ENCODE measurements at regions of chr9 and their contacts with region 1.

Region 1: GRCh38 chr9:88593537-88594185 is 58.7 kb downstream of the NXNL2 start:
- DNase-seq: peak in 1 of 2 donors; percentile 74
- ATAC-seq: peak in 2 of 3 donors; percentile 49 to 78
- H3K4me3 ChIP-seq: no peak overlapping the region
- H3K4me3 Mint-ChIP-seq: no peak overlapping the region
- H3K27ac ChIP-seq: no peak overlapping the region
- H3K27ac Mint-ChIP-seq: no peak overlapping the region
- H3K4me1 ChIP-seq: no peaks in the 10 kb centered on the region
- H3K4me1 Mint-ChIP-seq: peaks cover 5 to 7% of the 10 kb centered on the region in 2 donors
- H3K27me3 ChIP-seq: no peaks in the 10 kb centered on the region
- H3K27me3 Mint-ChIP-seq: peaks cover 7% of the 10 kb centered on the region in 2 donors
- CTCF ChIP-seq: peak; percentile 60

Region 2: GRCh38 chr9:88530018-88530417 is 63.6 kb before region 1 on chr9:
- intact Hi-C with region 1: no loop called
- DNase-seq: no peak
- ATAC-seq: no peak
- H3K4me3 ChIP-seq: no peak overlapping the region
- H3K4me3 Mint-ChIP-seq: no peak overlapping the region
- H3K27ac ChIP-seq: no peak overlapping the region
- H3K27ac Mint-ChIP-seq: no peak overlapping the region
- H3K4me1 ChIP-seq: peaks cover 1% of the 10 kb centered on the region
- H3K4me1 Mint-ChIP-seq: peaks cover 6 to 21% of the 10 kb centered on the region in 2 donors
- H3K27me3 ChIP-seq: peaks cover 4% of the 10 kb centered on the region
- H3K27me3 Mint-ChIP-seq: peaks cover 7 to 18% of the 10 kb centered on the region in 2 donors
- CTCF ChIP-seq: no peak

Region 3: DNA sequence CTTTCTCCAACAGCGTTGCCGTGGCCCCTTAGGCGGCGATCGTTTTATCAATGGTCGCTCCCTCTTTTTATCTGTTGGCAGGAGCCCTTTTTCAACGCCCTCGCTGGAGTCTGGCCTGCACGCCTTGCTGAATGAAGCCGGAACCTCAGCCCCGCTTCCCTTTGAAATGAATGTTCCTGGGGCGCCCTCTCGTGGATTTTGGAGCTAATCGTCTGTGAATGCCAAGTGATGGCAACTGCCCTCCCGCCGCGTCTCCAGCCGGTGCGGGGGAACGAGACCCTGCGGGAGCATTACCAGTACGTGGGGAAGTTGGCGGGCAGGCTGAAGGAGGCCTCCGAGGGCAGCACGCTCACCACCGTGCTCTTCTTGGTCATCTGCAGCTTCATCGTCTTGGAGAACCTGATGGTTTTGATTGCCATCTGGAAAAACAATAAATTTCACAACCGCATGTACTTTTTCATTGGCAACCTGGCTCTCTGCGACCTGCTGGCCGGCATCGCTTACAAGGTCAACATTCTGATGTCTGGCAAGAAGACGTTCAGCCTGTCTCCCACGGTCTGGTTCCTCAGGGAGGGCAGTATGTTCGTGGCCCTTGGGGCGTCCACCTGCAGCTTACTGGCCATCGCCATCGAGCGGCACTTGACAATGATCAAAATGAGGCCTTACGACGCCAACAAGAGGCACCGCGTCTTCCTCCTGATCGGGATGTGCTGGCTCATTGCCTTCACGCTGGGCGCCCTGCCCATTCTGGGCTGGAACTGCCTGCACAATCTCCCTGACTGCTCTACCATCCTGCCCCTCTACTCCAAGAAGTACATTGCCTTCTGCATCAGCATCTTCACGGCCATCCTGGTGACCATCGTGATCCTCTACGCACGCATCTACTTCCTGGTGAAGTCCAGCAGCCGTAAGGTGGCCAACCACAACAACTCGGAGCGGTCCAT is 407.6 kb after region 1 on chr9:
- intact Hi-C with region 1: loop called (anchors 2 kb)
- DNase-seq: peak; percentile 36 to 81
- ATAC-seq: peak in 2 of 3 donors; percentile 47 to 71
- H3K4me3 ChIP-seq: no peak overlapping the region
- H3K4me3 Mint-ChIP-seq: no peak overlapping the region
- H3K27ac ChIP-seq: no peak overlapping the region
- H3K27ac Mint-ChIP-seq: no peak overlapping the region
- H3K4me1 ChIP-seq: peaks cover 6% of the 10 kb centered on the region
- H3K4me1 Mint-ChIP-seq: peaks cover 5 to 6% of the 10 kb centered on the region in 2 donors
- H3K27me3 ChIP-seq: no peaks in the 10 kb centered on the region
- H3K27me3 Mint-ChIP-seq: peaks cover 13 to 42% of the 10 kb centered on the region in 2 donors
- CTCF ChIP-seq: peak; percentile 36

Region 4: GRCh38 chr9:89278997-89279739 is 685.5 kb after region 1 on chr9:
- intact Hi-C with region 1: loop called (anchors 2 kb)
- DNase-seq: peak in 1 of 2 donors; percentile 61
- ATAC-seq: peak in 1 of 3 donors; percentile 54
- H3K4me3 ChIP-seq: no peak overlapping the region
- H3K4me3 Mint-ChIP-seq: no peak overlapping the region
- H3K27ac ChIP-seq: no peak overlapping the region
- H3K27ac Mint-ChIP-seq: no peak overlapping the region
- H3K4me1 ChIP-seq: peaks cover 9% of the 10 kb centered on the region
- H3K4me1 Mint-ChIP-seq: peaks cover 0 to 12% of the 10 kb centered on the region in 2 donors
- H3K27me3 ChIP-seq: no peaks in the 10 kb centered on the region
- H3K27me3 Mint-ChIP-seq: peaks cover 0 to under 1% of the 10 kb centered on the region in 2 donors
- CTCF ChIP-seq: peak; percentile 82

Region 5: GRCh38 chr9:90102292-90102901 is 1508.7 kb after region 1 on chr9:
- intact Hi-C with region 1: loop called (anchors 10 kb)
- DNase-seq: peak; percentile 34 to 89
- ATAC-seq: peak; percentile 92 to 100 (median 100)
- H3K4me3 ChIP-seq: no peak overlapping the region
- H3K4me3 Mint-ChIP-seq: no peak overlapping the region
- H3K27ac ChIP-seq: no peak overlapping the region
- H3K27ac Mint-ChIP-seq: no peak overlapping the region
- H3K4me1 ChIP-seq: no peaks in the 10 kb centered on the region
- H3K4me1 Mint-ChIP-seq: peaks cover 0 to 5% of the 10 kb centered on the region in 2 donors
- H3K27me3 ChIP-seq: no peaks in the 10 kb centered on the region
- H3K27me3 Mint-ChIP-seq: no peaks in the 10 kb centered on the region
- CTCF ChIP-seq: peak; percentile 26